Natural killer cell (primary cell): ENCODE measurements at regions of chr3 and their contacts with region 1.

Region 1: DNA sequence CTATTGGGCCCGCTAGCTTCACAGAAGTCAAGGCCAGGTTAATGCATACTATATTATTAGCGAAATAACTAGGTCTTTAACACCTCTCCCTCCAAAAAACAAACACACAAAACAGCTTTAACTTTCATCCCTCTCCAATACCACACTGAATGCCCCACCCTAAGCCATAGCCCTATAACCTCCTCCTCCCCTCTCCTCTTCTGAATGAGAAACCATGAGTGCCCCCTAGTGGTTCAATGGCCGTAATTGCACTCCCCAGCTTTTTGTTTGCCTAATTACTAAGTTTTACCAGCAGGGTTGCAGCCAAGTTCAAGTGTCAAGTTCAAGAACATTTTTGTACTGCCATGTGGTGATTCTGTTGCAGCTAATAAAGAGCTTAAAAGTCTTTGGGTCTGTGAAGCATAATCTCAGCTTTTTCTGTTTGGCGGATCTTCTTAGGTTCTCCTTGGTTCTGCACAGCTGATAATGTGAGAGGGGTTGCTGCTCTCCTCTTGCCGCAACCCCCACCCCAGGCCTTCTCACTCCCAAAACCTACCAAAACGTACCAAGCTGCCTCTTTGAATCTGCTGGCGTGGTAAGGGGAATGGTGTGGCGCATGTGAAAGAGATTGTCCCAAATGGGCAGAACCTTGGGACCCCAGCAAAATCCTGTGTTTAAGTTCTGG is 57.9 kb downstream of the RPL22L1 start:
- DNase-seq: peak; percentile 45 to 83
- ATAC-seq: peak; percentile 87 to 99 (median 98)
- H3K4me3 ChIP-seq: no peak overlapping the region
- H3K4me3 Mint-ChIP-seq: no peak overlapping the region
- H3K27ac ChIP-seq: no peak overlapping the region
- H3K27ac Mint-ChIP-seq: no peak overlapping the region
- H3K4me1 ChIP-seq: no peaks in the 10 kb centered on the region
- H3K4me1 Mint-ChIP-seq: peaks cover 6 to 7% of the 10 kb centered on the region in 2 donors
- H3K27me3 ChIP-seq: no peaks in the 10 kb centered on the region
- H3K27me3 Mint-ChIP-seq: peaks cover 0 to 6% of the 10 kb centered on the region in 2 donors
- CTCF ChIP-seq: peak; percentile 93

Region 2: GRCh38 chr3:170414202-170414663 is 397.8 kb before region 1 on chr3:
- intact Hi-C with region 1: loop called (anchors 1 kb)
- DNase-seq: peak in 1 of 2 donors; percentile 69
- ATAC-seq: peak; percentile 70 to 78 (median 76)
- H3K4me3 ChIP-seq: no peak overlapping the region
- H3K4me3 Mint-ChIP-seq: no peak overlapping the region
- H3K27ac ChIP-seq: no peak overlapping the region
- H3K27ac Mint-ChIP-seq: no peak overlapping the region
- H3K4me1 ChIP-seq: peaks cover 9% of the 10 kb centered on the region
- H3K4me1 Mint-ChIP-seq: peaks cover 0 to 6% of the 10 kb centered on the region in 2 donors
- H3K27me3 ChIP-seq: peaks cover 5% of the 10 kb centered on the region
- H3K27me3 Mint-ChIP-seq: peaks cover 22 to 27% of the 10 kb centered on the region in 2 donors
- CTCF ChIP-seq: peak; percentile 94